ENCODE measurements at regions of chr4 and their contacts with region 1.

Region 1: DNA sequence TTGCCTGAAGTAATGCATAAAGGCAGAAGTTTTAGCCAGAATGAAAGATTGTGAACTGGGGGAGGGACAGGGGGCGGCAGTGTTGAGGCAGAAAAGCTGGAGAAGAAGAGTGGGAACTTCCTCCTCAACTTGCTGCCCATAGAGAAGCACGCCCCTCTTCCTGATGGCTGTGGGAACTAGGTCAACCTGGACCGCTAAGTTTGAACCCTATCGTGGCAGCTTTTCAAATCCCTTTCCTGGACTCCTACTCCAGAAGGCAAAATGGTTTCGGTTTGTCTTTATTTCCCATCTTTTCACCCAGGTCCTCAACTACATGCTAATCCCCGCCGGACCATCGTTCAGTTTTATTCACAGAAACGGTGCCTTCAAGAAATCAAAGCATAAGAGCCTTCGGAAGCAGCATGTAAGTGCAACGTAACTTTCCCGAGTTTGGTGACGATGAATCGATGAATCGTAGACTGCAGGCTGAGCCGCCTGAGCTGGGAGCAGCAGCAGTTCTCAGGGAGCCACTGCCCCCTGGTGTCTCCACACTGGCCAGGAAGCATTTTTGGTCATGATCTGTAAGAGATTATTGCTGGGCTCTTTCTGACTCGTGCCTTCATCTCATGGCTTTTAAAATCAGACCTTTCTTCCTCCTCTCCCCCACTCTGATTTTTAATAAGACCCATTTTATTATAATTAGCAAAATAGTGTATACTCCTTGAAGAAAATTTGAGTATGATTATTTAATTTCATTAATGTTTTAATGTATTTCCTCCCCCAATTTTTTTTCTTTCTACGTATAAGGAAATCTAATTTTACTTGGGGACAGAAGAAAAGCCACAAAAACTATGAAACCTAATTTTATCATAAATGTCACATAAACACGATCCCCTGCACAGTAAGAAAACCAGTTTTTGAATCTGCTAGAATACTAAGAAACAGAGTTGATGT is 21.4 kb downstream of the SPINK2 start:
- DNase-seq: peak; percentile 73
- H3K4me3 Mint-ChIP-seq: peak overlapping the region; percentile 88
- H3K27ac Mint-ChIP-seq: peak overlapping the region; percentile 49
- H3K4me1 Mint-ChIP-seq: peaks cover 30% of the 10 kb centered on the region
- H3K27me3 Mint-ChIP-seq: peaks cover 13% of the 10 kb centered on the region

Region 2: DNA sequence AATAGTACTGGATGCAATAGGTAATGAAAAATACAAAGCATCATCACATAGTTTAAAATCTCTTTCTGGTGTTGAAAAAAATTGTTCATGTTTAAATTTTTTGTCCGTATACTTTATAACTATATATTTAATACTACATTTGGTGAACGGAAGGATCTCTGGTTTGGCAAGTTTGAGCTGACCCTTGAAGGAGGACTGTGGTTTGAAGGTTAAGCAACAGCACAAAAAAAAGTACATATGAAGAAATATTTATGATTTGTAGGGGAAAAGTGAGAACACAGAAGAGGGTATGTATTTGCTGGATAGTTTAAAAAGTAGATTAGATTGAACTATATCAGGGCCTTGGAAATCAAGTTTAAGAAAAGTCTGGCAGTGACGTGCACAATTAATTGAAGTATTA is 319.4 kb before region 1 on chr4:
- intact Hi-C with region 1: loop called (anchors 5 kb)
- DNase-seq: no peak
- H3K4me3 Mint-ChIP-seq: no peak overlapping the region
- H3K27ac Mint-ChIP-seq: no peak overlapping the region
- H3K4me1 Mint-ChIP-seq: no peaks in the 10 kb centered on the region
- H3K27me3 Mint-ChIP-seq: no peaks in the 10 kb centered on the region

Region 3: DNA sequence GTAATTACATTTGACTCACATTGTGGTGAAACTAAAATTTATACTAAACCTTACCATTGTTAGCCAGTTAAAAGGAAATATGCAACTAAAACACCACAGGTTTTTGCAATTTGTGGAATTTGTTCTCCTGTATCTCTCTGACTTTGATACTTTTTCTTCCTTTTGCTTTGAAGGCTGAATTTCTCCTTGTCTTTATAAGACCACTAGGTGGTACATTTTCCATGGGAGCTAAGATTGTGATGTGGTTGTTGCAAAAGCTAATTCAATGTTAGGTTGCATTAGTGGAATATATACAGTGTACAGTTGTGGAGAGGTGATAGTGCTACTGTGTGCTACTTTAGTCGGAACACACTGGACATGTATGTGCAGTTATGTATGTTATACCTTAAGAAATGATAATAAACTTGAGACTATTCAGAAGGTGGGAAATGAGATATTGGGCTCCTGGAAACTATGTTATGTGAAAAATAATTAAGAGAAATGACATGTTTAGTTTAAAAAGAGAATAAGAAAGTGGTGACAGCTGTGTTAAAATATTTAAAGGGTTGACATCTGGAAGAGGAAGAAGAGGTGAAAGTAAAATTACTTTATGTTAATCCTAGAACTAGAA is 224.2 kb before region 1 on chr4:
- intact Hi-C with region 1: loop called (anchors 1 kb)
- DNase-seq: no peak
- H3K4me3 Mint-ChIP-seq: no peak overlapping the region
- H3K27ac Mint-ChIP-seq: no peak overlapping the region
- H3K4me1 Mint-ChIP-seq: no peaks in the 10 kb centered on the region
- H3K27me3 Mint-ChIP-seq: peaks cover 11% of the 10 kb centered on the region

Region 4: DNA sequence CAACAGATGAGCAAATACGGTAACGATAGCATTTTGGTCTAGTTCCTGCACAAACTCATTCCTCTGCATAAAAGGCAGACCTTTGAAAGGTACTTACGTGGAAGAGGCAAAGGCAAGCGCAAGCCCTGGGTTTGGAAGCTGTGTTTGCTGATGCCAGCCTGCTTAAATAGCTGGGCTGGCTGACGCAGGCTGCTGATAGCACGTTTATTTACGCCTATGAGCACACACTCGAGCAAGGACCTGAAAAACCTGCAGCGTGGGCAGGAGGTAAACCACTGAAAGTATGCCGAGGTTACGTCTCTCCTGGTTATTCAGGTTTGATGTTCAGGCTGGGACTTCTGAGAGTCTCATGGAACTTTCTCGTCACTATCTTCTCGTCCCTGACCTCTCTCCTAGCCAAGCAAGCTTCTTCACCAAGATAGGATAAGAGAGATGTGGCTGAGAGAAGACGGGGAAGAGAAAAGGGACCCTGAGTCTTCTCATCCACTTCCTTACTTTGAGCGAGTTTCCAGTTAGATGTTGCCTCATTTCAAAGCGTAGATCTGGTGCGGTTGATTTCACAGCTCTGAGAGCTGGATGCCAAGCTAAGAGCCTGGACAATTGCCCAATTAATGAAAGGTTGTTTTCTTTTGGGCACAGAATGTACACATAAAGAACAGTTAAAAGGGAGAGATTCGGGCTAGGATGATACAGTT is 118.8 kb before region 1 on chr4 and contains the start of gene HOPX:
- intact Hi-C with region 1: loop called (anchors 1 kb)
- DNase-seq: peak; percentile 20
- H3K4me3 Mint-ChIP-seq: peak within 1 kb of the TSS; percentile 57
- H3K27ac Mint-ChIP-seq: peak within 1 kb of the TSS; percentile 5
- H3K4me1 Mint-ChIP-seq: peaks cover 41% of the 10 kb centered on the region
- H3K27me3 Mint-ChIP-seq: peaks cover 65% of the 10 kb centered on the region
- total RNA-seq, gene HOPX: 121 and 128 TPM in 2 replicates

Region 5: DNA sequence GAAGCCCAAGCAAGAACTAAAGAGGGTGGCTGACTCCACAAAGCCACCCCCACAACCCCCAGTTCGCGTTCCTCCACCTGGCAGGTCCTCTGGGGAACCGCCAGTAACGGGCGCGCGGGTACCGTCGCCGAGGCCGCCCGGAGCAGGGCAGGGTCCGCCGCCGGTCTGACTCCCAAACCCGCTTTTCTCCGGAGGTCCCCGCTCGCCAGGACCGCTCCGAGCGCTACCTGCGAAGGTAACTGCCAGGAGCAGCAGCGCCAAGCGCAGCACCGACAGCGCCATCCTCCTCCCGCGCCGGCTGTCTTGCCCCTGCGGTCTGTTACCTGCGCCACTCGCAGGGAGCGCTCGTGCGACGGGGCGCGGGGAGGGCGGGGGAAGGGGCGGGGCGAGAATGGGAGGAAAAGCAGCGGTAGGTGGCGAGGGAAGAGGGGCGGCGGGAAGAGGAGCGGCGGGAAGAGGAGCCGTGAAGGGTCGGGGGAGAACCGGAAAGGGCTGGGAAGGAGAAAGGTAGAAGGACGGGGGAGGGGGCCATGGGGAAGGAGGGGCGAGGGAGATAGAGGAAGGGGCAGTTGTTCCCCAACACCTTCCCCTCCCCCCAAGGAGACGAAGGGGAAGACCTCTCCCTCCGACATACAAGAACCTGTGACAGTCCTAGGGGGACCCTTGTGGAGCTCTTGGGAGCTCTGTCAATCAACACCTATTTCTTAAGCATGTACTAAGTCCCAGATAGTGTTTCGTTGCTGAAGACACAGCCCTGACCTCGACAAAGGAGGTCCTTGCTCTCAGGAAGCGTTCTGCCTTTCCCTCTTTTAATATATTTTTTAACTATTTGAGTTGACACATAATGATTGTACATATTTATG is 21.5 kb after region 1 on chr4 and contains the start of gene SPINK2:
- intact Hi-C with region 1: loop called (anchors 1 kb)
- DNase-seq: peak; percentile 44
- H3K4me3 Mint-ChIP-seq: peak within 1 kb of the TSS; percentile 45
- H3K27ac Mint-ChIP-seq: no peak within 1 kb of the TSS
- H3K4me1 Mint-ChIP-seq: peaks cover 29% of the 10 kb centered on the region
- H3K27me3 Mint-ChIP-seq: peaks cover 50% of the 10 kb centered on the region
- total RNA-seq, gene SPINK2: not detected in 2 replicates

Measured in activated T-helper 1 cell treated with anti-CD3 and anti-CD28 coated beads, Interleukin-12 subunit alpha, Interleukin-12 subunit beta, Interleukin-2, Interleukin-4 antibody, amounts not matched to agents 30 ng/mL and 10 ng/mL and 1 ng/mL, durations not matched to agents 14 hours and 24 hours and 36 hours (primary cell).